ENCODE measurements at regions of chr6 and their contacts with region 1.

Region 1: DNA sequence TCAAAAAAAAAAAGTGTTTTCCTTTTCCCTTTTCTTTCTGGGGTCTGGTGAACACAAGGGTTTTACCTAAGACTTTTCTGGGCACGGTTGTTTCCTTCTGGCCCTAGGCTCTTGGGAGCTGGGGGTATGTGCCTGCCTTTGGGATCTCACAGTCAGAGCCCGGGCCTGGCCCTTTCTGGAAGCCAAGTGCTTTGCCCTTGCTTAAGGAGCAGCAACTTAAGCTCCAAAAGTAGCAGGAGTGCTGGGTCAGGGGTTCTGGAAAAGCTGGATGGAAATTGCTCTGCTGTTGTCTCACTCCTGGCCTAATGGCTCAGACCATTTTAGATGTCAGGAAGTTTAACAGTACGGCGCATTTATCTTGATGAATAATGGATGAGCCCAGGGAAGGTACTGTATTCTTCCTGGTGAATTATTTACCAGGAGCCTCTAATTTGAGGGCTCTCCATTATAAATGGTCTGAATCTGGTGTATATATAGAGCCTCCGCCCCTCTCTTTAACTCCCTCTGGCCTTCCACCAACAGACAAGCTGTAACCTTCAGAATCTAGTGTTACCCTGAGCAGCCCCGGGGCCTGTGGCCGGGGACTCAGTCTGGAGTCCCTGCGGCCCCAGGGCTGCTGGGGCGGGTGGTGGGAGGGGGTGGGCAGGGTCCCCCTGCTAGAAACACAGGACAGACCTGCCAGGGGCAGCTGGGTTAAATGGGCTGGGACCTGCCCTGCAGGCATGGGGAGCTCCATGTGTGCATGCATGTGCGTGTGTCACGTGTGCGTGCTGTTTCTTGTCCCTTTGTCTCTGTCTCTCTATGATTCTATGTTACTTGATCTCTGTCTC is 37.5 kb downstream of the PTK7 start:
- DNase-seq: no peak
- H3K4me3 ChIP-seq: no peak overlapping the region
- H3K27ac ChIP-seq: peak overlapping the region; percentile 37; the same call in 1 of the 2 replicates
- H3K4me1 ChIP-seq: peaks cover 3 to 11% (median 5%) of the 10 kb centered on the region in 4 experiments; a peak in 6 of 7 replicates
- H3K27me3 ChIP-seq: no peaks in the 10 kb centered on the region
- CTCF ChIP-seq: no peak
- EP300 ChIP-seq: no peak
- POLR2A ChIP-seq: no peak
- RAD21 ChIP-seq: no peak

Region 2: GRCh38 chr6:43096451-43097097 is 17.1 kb before region 1 on chr6:
- CTCF ChIA-PET with region 1: interaction called, 3 read pairs
- POLR2A ChIA-PET with region 1: interaction called, 13 read pairs
- DNase-seq: no peak
- H3K4me3 ChIP-seq: no peak overlapping the region
- H3K27ac ChIP-seq: peak overlapping the region; percentile 40; the same call in 1 of the 2 replicates
- H3K4me1 ChIP-seq: peaks cover 10 to 23% (median 14%) of the 10 kb centered on the region in 4 experiments; a peak in 6 of 7 replicates
- H3K27me3 ChIP-seq: no peaks in the 10 kb centered on the region
- CTCF ChIP-seq: no peak
- EP300 ChIP-seq: no peak
- POLR2A ChIP-seq: no peak
- RAD21 ChIP-seq: no peak